Activated naive CD8-positive, alpha-beta T cell treated with anti-CD3 and anti-CD28 coated beads, Interleukin-2, amount 10 ng/mL, durations not matched to agents 7 days and 5 days (primary cell): ENCODE measurements at regions of chr1 and their contacts with region 1.

Region 1: GRCh38 chr1:182146308-182146707 is 84.8 kb upstream of the ZNF648 start:
- DNase-seq: no peak
- ATAC-seq: no peak
- H3K4me3 Mint-ChIP-seq: no peak overlapping the region
- H3K27ac Mint-ChIP-seq: no peak overlapping the region
- H3K4me1 Mint-ChIP-seq: peaks cover 25% of the 10 kb centered on the region
- H3K27me3 Mint-ChIP-seq: no peaks in the 10 kb centered on the region

Region 2: DNA sequence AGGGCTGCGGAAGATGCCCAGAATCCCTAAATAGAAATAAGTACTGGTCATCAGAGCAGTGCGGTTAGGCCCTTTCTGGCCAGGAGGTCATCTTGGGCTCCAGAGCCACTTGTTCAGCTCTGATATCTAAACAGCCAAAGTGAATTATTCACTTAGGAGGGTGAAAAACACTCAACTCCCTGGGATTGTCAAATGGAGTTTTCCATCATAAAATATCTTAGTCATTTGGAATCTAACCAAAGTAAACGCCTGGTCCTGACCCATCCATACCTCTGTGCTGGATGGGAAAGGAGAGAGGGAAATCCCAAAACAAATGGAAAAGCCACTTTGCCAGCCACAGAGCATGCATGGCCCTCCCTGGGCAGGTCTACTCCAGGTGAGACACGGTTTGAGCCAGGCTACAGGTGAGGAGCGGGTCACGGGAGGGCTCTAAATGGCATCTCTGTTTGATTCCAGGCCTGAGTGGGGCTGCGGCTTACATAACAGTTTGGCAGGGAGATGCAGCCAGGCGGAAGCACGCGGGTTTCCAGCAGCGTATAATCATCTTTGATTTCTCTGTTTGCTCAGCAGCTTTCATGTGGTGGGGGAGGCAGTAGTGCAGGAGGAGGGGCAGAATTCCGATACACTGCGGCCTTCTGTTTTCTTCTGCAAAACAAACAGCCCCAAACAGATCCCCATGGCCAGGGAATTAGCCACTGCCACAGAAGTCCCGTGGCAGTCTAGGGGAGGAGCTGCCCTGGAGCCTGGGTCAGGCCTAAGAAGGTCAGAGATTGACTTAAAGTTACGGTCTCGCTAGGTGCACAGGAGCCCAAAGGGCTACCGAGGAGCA is 25.7 kb before region 1 on chr1:
- POLR2A ChIA-PET with region 1: no interaction called
- DNase-seq: no peak
- ATAC-seq: no peak
- H3K4me3 Mint-ChIP-seq: no peak overlapping the region
- H3K27ac Mint-ChIP-seq: no peak overlapping the region
- H3K4me1 Mint-ChIP-seq: no peaks in the 10 kb centered on the region
- H3K27me3 Mint-ChIP-seq: peaks cover 10% of the 10 kb centered on the region

Region 3: GRCh38 chr1:182391362-182392044 is 245.2 kb after region 1 on chr1 and contains the start of gene GLUL:
- POLR2A ChIA-PET with region 1: interaction called, 10 read pairs
- DNase-seq: peak; percentile 80
- ATAC-seq: peak; percentile 80
- H3K4me3 Mint-ChIP-seq: peak within 1 kb of the TSS; percentile 92
- H3K27ac Mint-ChIP-seq: peak within 1 kb of the TSS; percentile 90
- H3K4me1 Mint-ChIP-seq: peaks cover 17% of the 10 kb centered on the region
- H3K27me3 Mint-ChIP-seq: peaks cover 47% of the 10 kb centered on the region
- total RNA-seq, gene GLUL: 65.8 to 72.8 TPM